Activated CD4-positive, alpha-beta T cell treated with anti-CD3 and anti-CD28 coated beads for 36 hours (primary cell): ENCODE measurements at regions of chr1 and their contacts with region 1.

Region 1: DNA sequence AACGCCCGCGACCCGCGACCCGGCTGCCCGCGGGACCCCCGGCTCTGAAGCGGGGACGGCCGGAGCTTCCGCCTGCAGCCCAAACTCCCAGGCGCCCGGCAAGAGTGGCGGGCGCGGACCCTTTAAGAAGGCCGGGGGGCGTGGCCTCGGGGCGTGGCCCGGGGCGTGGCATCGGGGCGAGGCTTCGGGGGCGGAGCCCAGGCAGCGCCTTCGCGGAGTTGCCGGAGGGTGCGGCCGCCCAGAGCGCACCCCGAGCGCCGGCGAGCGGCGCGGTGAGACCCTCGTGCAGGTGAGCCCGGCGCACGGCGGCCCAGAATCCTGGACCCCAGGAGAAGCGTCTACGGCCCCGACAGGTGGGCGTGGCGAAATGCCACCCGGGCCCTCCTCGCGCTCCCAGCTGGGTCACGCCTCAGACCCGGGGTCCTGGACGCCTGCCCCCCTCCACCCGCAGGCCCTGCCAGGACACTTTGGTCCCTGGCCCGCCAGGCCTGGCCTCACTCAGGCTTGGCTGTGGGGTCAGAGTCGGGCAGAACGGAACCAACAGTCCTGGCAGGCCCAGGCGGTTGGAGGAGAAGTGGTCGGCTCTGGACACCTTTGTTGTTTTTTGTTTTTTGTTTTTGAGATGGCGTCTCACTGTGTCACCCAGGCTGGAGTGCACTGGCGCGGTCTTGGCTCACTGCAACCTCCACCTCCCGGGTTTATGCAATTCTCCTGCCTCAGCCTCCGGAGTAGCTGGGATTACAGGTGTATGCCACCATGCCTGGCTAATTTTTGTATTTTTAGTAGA is 14.4 kb downstream of the RNF223 start:
- DNase-seq: peak; percentile 95
- ATAC-seq: peak; percentile 51
- H3K4me3 Mint-ChIP-seq: peak overlapping the region; percentile 82
- H3K27ac Mint-ChIP-seq: no peak overlapping the region
- H3K4me1 Mint-ChIP-seq: peaks cover 29% of the 10 kb centered on the region
- H3K27me3 Mint-ChIP-seq: peaks cover 20% of the 10 kb centered on the region

Region 2: DNA sequence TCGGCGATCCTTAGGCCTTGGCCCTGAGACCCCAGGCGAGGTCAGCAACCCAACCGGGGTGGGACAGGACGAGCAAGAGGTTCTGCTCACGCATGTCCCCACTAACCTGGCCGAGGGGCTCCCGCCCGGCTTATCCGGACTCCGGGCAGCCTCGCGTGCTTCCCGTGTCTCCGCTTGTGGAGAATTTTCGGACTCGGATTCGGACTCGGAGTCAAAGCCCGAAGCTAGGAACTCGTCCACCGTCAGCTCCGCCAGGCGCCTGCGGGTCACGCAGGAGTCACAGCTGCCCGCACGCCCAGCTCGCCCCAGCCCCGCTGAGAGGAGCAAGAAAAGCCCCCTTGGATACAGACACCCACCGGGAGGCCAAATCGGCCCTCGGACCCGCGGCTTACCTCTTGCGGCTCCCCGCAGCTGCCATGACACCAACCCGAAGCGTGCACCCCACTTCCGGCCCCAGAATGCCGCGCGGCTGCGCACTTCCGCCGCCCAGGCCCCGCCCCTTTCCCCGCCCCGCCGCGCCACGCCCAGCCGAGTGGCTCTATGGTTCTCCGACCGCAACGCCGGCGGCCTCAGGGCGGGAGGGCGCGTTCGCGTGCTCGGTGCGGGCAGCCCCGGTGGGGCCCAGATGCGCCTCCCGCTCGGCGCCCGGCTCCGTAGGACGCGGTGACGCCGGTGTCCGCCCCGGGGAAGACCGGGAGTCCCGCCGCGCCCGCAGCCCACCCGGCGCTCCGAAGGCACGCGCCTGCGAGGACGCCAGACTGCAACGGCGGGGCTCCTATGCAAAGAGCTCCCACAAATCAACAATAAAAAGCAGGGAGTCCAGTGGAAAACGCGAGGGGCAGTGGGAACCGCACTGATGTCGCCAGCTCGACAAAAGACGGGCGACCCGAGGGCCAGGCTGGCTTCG is 100.6 kb before region 1 on chr1 and contains the start of gene NOC2L:
- CTCF ChIA-PET with region 1: no interaction called
- POLR2A ChIA-PET with region 1: no interaction called
- intact Hi-C with region 1: loop called in 1 of 2 experiments (anchors 1 kb)
- DNase-seq: peak; percentile 98
- ATAC-seq: peak; percentile 86
- H3K4me3 Mint-ChIP-seq: peak within 1 kb of the TSS; percentile 82
- H3K27ac Mint-ChIP-seq: peak within 1 kb of the TSS; percentile 63
- H3K4me1 Mint-ChIP-seq: peaks cover 18% of the 10 kb centered on the region
- H3K27me3 Mint-ChIP-seq: no peaks in the 10 kb centered on the region
- total RNA-seq, gene NOC2L: 112 to 134 TPM

Region 3: GRCh38 chr1:970242-970972 is 89.3 kb before region 1 on chr1:
- CTCF ChIA-PET with region 1: no interaction called
- POLR2A ChIA-PET with region 1: no interaction called
- intact Hi-C with region 1: no loop called
- DNase-seq: no peak
- ATAC-seq: no peak
- H3K4me3 Mint-ChIP-seq: no peak overlapping the region
- H3K27ac Mint-ChIP-seq: no peak overlapping the region
- H3K4me1 Mint-ChIP-seq: peaks cover 5% of the 10 kb centered on the region
- H3K27me3 Mint-ChIP-seq: peaks cover 12% of the 10 kb centered on the region

Region 4: DNA sequence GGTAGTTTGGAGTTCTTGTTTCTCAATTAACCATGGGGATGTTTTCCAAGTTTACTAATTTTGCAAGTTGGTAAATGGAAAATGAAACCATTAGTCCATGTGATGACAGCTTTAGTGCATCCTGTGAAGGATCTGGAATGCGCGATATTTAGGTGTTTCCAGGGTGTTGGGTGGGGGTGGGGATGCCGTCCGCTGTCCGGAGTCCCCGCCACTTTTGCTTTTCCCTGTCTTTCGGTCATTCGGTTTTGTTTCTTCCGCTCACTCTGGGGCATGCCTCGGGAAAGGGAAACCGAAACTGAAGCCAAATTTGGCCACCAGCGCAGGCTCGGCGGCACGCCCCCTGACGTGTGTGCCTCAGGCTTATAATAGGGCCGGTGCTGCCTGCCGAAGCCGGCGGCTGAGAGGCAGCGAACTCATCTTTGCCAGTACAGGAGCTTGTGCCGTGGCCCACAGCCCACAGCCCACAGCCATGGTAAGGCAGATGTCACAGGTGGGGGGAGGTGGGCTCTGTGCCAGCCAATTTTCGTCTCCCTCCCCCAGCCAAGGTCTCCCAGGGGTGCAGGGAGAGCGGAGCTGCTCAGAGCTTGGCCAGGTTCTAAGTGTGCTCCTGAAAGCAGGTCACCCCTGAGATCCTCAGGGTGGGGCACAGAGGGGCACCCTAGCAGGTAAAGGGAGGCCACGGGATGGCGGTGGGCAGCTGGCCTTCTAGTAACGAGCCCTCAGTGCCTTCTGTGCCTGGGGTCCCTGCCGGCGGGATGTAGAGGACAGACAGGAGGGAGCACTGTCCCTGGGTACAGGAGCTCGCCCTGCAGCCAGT is 46.4 kb before region 1 on chr1 and contains the start of gene ISG15:
- CTCF ChIA-PET with region 1: interaction called, 4 read pairs
- POLR2A ChIA-PET with region 1: no interaction called
- intact Hi-C with region 1: loop called in 1 of 2 experiments (anchors 1 kb)
- DNase-seq: peak; percentile 92
- ATAC-seq: peak; percentile 93
- H3K4me3 Mint-ChIP-seq: peak within 1 kb of the TSS; percentile 74
- H3K27ac Mint-ChIP-seq: peak within 1 kb of the TSS; percentile 80
- H3K4me1 Mint-ChIP-seq: peaks cover 27% of the 10 kb centered on the region
- H3K27me3 Mint-ChIP-seq: peaks cover 2% of the 10 kb centered on the region
- total RNA-seq, gene ISG15: 30.5 to 51.7 TPM

Region 5: GRCh38 chr1:1033009-1033587 is 26.6 kb before region 1 on chr1:
- CTCF ChIA-PET with region 1: interaction called, 4 read pairs
- POLR2A ChIA-PET with region 1: interaction called, 5 read pairs
- intact Hi-C with region 1: loop called (anchors 1 to 2 kb)
- DNase-seq: peak; percentile 97
- ATAC-seq: peak; percentile 95
- H3K4me3 Mint-ChIP-seq: peak overlapping the region; percentile 33
- H3K27ac Mint-ChIP-seq: no peak overlapping the region
- H3K4me1 Mint-ChIP-seq: peaks cover 5% of the 10 kb centered on the region
- H3K27me3 Mint-ChIP-seq: peaks cover 18% of the 10 kb centered on the region

Region 6: DNA sequence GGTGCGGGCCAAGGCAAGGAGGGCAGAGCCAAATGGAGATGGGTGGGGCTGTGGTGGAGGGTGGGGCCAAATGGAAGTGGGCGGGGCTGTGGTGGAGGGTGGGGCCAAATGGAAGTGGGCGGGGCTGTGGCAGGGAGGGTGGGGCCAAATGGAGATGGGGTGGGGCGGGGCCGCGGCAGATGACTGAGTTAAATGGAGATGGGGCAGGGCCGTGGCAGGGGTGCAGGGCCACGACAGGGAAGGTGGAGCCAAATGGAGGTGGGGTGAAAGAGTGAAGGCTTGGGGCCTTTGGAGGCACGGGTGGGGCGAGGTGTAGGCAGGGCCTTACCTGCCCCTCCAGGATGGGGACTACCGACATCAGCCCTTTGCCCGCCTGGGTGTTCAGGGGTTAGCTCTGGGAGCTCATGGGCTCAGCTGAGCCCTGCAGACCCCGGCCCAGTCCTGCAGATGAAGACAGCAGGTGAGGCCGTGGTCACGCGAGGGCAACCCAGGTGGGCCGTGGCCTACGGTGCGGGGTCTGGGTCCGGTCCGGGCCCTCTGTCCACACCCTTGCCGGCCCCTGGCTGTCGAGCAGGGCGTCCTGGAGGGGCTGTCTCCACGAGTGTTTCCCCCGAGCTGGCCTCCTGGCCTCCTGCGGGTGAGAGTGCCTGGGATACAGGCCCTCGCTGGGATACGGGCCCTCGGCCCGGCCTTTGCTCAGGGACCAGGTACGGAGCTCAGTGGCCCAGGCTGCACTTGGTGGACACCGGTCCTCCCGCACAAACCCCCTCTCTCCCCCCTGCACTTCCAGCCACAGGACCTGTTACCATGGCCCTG is 32.2 kb after region 1 on chr1:
- CTCF ChIA-PET with region 1: no interaction called
- POLR2A ChIA-PET with region 1: no interaction called
- intact Hi-C with region 1: loop called in 1 of 2 experiments (anchors 1 kb)
- DNase-seq: peak; percentile 61
- ATAC-seq: peak; percentile 64
- H3K4me3 Mint-ChIP-seq: no peak overlapping the region
- H3K27ac Mint-ChIP-seq: no peak overlapping the region
- H3K4me1 Mint-ChIP-seq: peaks cover 3% of the 10 kb centered on the region
- H3K27me3 Mint-ChIP-seq: no peaks in the 10 kb centered on the region

Region 7: DNA sequence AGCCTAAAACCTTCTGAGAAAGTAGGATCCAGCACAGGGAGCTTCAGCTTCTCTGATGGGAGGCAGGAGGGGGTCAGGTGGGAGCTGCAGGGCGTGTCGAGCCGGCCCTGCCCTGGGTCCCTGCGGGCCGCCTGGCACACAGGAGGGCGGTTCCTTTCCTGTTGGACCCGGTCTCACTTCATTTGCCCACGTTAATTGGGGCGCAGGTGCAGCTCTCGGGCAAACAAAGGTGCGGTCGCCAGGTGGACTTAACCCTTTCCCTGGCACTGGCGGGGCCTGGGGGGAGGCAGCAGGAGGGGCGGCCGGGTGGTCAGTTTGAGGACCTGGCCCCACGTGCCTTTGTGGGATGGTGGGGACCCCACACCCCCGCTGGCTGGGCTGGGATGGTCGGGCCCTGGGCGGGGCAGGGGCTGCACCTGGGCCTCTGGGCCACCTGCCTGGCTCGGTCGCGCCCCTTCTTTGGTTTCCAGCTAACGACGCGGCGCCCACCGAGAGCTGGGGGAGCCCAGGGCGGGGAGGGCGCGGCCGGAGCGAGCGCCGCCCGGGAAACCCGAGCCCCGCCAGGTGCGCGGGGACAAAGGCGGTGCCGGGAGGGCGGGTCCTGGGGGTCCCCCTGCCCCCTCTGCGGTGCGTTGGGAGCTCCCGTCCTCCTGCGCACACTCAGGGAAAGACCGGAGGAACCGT is 77.0 kb after region 1 on chr1:
- CTCF ChIA-PET with region 1: no interaction called
- POLR2A ChIA-PET with region 1: no interaction called
- intact Hi-C with region 1: no loop called
- DNase-seq: no peak
- ATAC-seq: peak; percentile 8
- H3K4me3 Mint-ChIP-seq: no peak overlapping the region
- H3K27ac Mint-ChIP-seq: no peak overlapping the region
- H3K4me1 Mint-ChIP-seq: peaks cover 6% of the 10 kb centered on the region
- H3K27me3 Mint-ChIP-seq: no peaks in the 10 kb centered on the region

Region 8: GRCh38 chr1:1206376-1207260 is 146.9 kb after region 1 on chr1 and contains the start of gene TNFRSF18:
- CTCF ChIA-PET with region 1: no interaction called
- POLR2A ChIA-PET with region 1: no interaction called
- intact Hi-C with region 1: loop called in 1 of 2 experiments (anchors 1 kb)
- DNase-seq: peak; percentile 75
- ATAC-seq: peak; percentile 7
- H3K4me3 Mint-ChIP-seq: peak within 1 kb of the TSS; percentile 77
- H3K27ac Mint-ChIP-seq: peak within 1 kb of the TSS; percentile 99
- H3K4me1 Mint-ChIP-seq: peaks cover 31% of the 10 kb centered on the region
- H3K27me3 Mint-ChIP-seq: no peaks in the 10 kb centered on the region
- total RNA-seq, gene TNFRSF18: 95.0 to 164 TPM